Activated CD4-positive, alpha-beta T cell treated with anti-CD3 and anti-CD28 coated beads, Interleukin-2, amount 10 ng/mL, durations not matched to agents 7 days and 5 days (primary cell): ENCODE measurements at regions of chr13 and their contacts with region 1.

Region 1: GRCh38 chr13:99087096-99087953 is 109.5 kb upstream of the DOCK9 start:
- DNase-seq: peak; percentile 93
- H3K4me3 Mint-ChIP-seq: peak overlapping the region; percentile 97
- H3K27ac Mint-ChIP-seq: peak overlapping the region; percentile 99
- H3K4me1 Mint-ChIP-seq: peaks cover 45% of the 10 kb centered on the region
- H3K27me3 Mint-ChIP-seq: no peaks in the 10 kb centered on the region

Region 2: DNA sequence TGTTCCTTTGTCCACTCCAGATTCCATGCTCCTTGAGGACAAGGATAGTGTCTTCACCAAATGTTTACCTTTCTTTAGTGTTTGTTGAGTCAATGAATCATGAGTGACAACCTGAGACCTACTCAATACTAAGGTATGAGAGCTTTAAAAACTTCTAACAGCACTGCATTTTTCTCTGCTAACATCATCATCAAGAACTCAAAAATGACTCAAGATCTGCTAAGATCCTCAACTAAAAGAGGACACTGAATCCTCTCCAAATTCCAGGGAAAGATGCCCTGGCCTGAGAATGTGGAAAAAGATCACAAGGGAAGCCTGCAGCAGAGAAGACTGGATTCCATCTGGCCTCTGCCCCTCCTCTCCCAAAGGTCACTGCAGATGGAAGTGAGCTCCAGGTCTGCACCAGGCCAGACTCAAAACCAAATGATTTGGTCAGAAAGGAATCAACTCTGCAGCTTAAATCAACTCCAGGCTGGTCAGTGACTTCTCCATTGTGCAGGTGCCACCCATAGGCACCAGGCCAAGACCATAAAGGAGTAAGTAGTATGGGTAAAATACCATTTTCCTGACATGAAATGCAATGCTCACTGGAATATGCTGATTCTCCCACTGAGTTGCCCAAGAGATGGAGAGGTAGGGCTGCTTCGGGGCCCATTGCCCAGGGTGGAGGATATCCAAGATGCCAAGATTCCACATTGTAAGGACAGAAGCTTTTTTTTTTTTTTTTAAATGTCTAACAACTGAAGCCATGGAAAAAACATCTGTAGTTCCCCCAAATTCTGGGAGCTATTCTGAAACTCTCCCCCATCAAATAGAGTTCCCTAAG is 20.0 kb before region 1 on chr13:
- CTCF ChIA-PET with region 1: interaction called, 10 read pairs
- POLR2A ChIA-PET with region 1: no interaction called
- DNase-seq: no peak
- H3K4me3 Mint-ChIP-seq: no peak overlapping the region
- H3K27ac Mint-ChIP-seq: peak overlapping the region; percentile 86
- H3K4me1 Mint-ChIP-seq: peaks cover 78% of the 10 kb centered on the region
- H3K27me3 Mint-ChIP-seq: no peaks in the 10 kb centered on the region

Region 3: DNA sequence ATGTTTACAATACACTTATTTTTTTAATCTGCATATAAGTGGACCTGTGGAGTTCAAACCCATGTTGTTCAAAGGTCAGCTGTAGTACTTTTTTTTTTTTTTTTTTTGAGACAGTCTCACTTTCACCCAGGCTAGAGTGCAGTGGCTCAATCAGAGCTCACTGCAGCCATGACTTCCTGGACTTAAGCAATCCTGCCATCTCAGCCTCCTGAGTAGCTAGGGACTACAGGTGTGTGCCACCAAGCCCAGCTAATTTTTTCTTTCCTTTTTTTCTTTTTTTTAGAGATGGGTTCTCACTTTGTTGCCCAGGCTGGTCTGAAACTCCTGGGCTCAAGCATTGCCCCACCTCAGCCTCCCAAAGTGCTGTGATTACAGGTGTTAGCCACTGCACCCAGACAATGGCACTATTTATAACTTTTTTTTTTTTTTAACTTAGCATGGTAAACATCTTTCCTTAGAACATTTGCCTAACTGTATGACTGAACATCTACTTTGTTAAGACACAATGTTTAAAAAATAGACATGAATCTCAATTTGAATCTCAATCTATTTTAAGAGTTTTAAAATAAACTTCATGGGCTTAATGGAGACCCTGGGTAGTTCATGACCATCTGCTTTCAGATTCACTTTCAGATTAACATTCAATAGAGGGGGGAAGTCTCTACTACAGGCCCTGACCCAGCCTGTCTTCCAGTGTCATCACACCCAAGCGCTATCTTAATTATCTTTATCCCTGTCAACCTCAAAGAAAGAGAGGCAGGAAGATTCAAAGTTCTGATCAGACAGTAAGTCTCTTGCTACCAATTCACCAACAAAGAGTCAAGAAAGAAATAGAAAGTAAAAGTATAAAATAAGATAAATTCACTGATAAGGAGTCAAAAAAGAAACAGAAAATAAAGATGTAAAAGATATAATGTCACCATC is 11.8 kb before region 1 on chr13:
- CTCF ChIA-PET with region 1: interaction called, 10 read pairs
- POLR2A ChIA-PET with region 1: no interaction called
- DNase-seq: peak; percentile 55
- H3K4me3 Mint-ChIP-seq: peak overlapping the region; percentile 59
- H3K27ac Mint-ChIP-seq: peak overlapping the region; percentile 96
- H3K4me1 Mint-ChIP-seq: peaks cover 82% of the 10 kb centered on the region
- H3K27me3 Mint-ChIP-seq: no peaks in the 10 kb centered on the region